ENCODE measurements at regions of chr13 and their contacts with region 1.

Region 1: DNA sequence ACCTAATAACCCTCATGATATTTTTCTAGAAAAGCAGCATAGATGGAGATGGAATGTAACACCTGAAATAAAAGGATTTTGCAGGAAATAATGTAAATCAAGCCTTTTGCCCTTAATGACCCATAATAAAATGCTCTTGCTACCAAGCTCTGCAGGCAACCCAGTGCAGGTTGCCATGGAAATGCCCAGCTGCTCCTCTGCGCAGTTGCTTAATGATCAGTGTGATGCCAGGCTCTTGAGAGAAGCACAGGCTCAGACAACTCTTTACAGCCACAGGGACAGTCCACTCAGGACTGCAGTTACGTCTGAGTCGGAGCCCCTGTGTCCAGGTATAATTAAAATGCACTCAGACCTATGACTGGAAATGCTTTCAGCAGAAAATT is 165.5 kb downstream of the LACC1 start:
- DNase-seq: no peak
- H3K4me3 ChIP-seq: no peak overlapping the region
- H3K27ac ChIP-seq: no peak overlapping the region
- H3K4me1 ChIP-seq: peaks cover 27% of the 10 kb centered on the region
- H3K27me3 ChIP-seq: no peaks in the 10 kb centered on the region
- CTCF ChIP-seq: no peak

Region 2: GRCh38 chr13:43905435-43906031 is 139.6 kb before region 1 on chr13:
- CTCF ChIA-PET with region 1: interaction called, 3 read pairs
- POLR2A ChIA-PET with region 1: interaction called, 6 read pairs
- intact Hi-C with region 1: loop called (anchors 2 kb)
- DNase-seq: peak; percentile 9 to 62
- H3K4me3 ChIP-seq: no peak overlapping the region
- H3K27ac ChIP-seq: no peak overlapping the region
- H3K4me1 ChIP-seq: peaks cover 12% of the 10 kb centered on the region
- H3K27me3 ChIP-seq: no peaks in the 10 kb centered on the region
- CTCF ChIP-seq: peak; percentile 77

Region 3: DNA sequence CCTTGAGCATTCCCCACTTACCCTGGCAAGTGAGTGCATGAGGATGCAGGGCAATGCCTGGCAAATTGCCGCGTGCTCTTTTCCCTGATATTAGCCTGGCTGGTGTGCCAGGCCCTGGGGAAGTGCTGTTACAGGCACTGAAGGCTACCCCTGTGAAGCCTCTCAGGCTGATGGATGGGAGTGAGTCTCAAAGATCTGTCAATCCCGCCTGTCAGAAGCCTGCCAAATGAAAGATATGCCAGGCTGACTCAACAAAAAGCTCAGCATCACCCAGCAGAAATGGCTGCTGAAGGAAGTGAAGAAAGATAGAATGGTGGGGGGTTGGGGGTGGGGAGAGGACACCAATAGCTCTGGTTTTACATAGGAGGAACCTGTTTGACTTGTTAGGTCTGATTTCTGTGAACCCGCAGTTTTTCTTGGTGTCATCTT is 53.4 kb before region 1 on chr13:
- CTCF ChIA-PET with region 1: interaction called, 31 read pairs
- POLR2A ChIA-PET with region 1: no interaction called
- intact Hi-C with region 1: no loop called
- DNase-seq: no peak
- H3K4me3 ChIP-seq: no peak overlapping the region
- H3K27ac ChIP-seq: no peak overlapping the region
- H3K4me1 ChIP-seq: peaks cover 10% of the 10 kb centered on the region; the same call in 1 of the 2 replicates
- H3K27me3 ChIP-seq: no peaks in the 10 kb centered on the region
- CTCF ChIP-seq: no peak

Region 4: GRCh38 chr13:44004878-44005277 is 40.3 kb before region 1 on chr13:
- CTCF ChIA-PET with region 1: no interaction called
- POLR2A ChIA-PET with region 1: no interaction called
- intact Hi-C with region 1: no loop called
- DNase-seq: no peak
- H3K4me3 ChIP-seq: no peak overlapping the region
- H3K27ac ChIP-seq: no peak overlapping the region
- H3K4me1 ChIP-seq: no peaks in the 10 kb centered on the region
- H3K27me3 ChIP-seq: no peaks in the 10 kb centered on the region
- CTCF ChIP-seq: no peak

Measured in PC-9 (cell line).